Activated naive CD4-positive, alpha-beta T cell treated with anti-CD3 and anti-CD28 coated beads, Interleukin-2, amount 10 ng/mL, durations not matched to agents 7 days and 5 days (primary cell): ENCODE measurements at regions of chr17 and their contacts with region 1.

Region 1: DNA sequence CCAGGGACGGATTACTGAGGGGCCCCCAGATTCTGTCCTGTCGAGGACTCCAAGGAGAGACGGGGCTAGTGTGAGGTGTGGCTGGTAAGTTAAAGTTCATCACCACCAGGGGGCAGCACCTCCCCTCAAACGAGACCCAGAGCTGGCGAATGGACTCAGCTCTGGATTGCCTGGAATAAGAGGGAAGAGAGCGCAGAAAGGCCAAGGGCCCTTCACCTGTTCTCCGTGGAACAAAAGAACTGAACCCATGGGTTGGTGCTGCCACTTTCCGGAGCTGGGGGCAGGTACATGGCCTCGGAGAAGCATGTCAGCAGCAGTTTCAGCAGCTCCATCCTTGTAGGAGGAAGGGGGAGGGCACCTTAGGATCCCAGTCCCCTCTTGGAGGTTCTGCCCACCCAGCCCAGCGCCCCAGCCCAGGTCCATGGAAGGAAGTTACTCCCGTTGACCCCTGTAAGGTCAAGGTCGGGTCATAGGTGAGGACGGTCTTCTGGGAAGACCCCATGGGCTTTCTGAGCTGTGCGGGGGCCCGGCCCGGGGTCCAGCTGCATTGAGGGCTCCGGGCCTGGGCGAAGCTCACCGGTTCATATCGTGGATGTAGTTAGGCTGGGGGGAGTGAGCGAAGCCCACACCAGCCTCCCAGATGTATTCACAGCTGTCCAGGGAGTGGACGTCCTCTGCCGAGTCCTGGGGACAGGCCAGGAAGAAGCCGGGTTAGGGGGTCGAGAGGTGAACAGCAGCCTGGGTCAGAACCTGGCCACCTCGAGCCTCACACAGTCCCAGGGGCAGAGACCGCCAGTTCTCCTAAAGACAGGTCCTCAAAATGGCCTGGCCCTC is 10.7 kb downstream of the HID1 start:
- DNase-seq: peak; percentile 89
- H3K4me3 Mint-ChIP-seq: no peak overlapping the region
- H3K27ac Mint-ChIP-seq: no peak overlapping the region
- H3K4me1 Mint-ChIP-seq: peaks cover 9% of the 10 kb centered on the region
- H3K27me3 Mint-ChIP-seq: peaks cover 38% of the 10 kb centered on the region

Region 2: DNA sequence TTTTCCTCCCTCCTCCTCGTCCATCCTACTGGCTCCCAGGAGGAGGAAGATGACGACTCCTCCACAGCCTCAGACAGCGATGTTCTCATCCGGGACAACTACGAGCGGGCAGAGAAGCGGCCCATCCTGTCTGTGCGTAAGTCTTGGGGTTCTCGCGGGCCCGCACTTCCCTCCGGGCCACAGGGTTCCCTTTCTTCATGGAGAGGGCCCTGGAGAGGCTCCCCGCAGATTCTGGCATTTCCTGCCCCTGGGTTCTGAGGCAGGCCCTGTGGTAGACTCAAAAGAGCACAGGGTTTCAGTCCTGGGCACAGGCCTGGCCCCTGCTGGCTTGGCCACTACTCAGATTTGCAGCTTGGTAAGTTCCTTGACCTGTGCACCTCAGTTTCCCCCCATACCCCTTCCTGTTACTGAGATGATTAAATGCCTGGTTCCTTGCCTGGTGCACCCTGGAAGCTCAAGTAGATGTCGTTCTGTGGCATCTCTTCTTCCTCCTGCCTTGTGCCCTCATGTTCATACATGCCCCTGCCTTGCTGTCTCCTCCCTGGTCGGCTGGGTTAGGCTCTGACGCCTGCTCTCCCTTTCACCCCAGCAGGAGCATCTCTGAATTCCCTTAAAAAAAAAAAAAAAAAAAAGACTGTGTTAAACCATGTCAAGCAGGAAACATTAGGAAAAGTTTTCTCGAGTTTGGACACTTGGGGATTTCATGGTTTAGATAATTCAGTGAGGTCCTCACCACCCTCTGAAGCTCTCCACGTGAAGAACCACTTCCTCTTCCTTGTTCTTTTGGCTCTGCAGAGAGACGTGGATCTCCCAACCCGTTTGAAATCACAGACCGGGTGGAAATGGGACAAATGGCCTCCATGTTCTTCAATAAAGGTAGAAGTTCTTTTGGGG is 171.5 kb before region 1 on chr17:
- CTCF ChIA-PET with region 1: interaction called, 38 read pairs
- DNase-seq: peak; percentile 38
- H3K4me3 Mint-ChIP-seq: peak overlapping the region; percentile 35
- H3K27ac Mint-ChIP-seq: peak overlapping the region; percentile 88
- H3K4me1 Mint-ChIP-seq: peaks cover 49% of the 10 kb centered on the region
- H3K27me3 Mint-ChIP-seq: no peaks in the 10 kb centered on the region

Region 3: GRCh38 chr17:74951680-74952421 is 10.0 kb before region 1 on chr17:
- CTCF ChIA-PET with region 1: interaction called, 15 read pairs
- DNase-seq: no peak
- H3K4me3 Mint-ChIP-seq: no peak overlapping the region
- H3K27ac Mint-ChIP-seq: no peak overlapping the region
- H3K4me1 Mint-ChIP-seq: no peaks in the 10 kb centered on the region
- H3K27me3 Mint-ChIP-seq: peaks cover 42% of the 10 kb centered on the region

Region 4: DNA sequence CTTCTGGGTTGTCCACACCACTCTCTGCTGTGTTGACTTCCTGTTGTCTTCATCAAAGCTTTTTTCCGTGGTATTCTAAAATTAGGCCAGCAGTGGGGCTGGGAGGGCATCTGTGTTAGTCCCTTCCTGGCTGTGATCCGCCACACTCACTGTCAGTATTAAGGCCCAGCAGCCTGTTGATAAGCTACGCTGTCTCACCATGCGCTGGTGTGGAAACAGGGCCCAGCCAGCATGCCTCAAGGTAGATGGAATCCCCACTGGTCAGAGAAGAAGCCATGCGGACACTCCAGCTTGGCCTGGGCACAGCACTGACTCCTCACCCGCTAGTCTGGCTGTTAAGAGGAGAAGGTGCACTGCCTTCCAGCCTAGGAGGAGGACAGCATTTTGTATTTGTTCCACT is 36.9 kb after region 1 on chr17:
- CTCF ChIA-PET with region 1: interaction called, 12 read pairs
- DNase-seq: no peak
- H3K4me3 Mint-ChIP-seq: no peak overlapping the region
- H3K27ac Mint-ChIP-seq: peak overlapping the region; percentile 53
- H3K4me1 Mint-ChIP-seq: peaks cover 9% of the 10 kb centered on the region
- H3K27me3 Mint-ChIP-seq: peaks cover 20% of the 10 kb centered on the region

Region 5: GRCh38 chr17:75046582-75047289 is 84.9 kb after region 1 on chr17 and contains the starts of genes ATP5PD and KCTD2:
- CTCF ChIA-PET with region 1: interaction called, 11 read pairs
- DNase-seq: peak; percentile 97
- H3K4me3 Mint-ChIP-seq: peak within 1 kb of the TSS; percentile 97
- H3K27ac Mint-ChIP-seq: peak within 1 kb of the TSS; percentile 96
- H3K4me1 Mint-ChIP-seq: peaks cover 49% of the 10 kb centered on the region
- H3K27me3 Mint-ChIP-seq: peaks cover 3% of the 10 kb centered on the region

Region 6: GRCh38 chr17:75173526-75173925 is 211.7 kb after region 1 on chr17:
- CTCF ChIA-PET with region 1: interaction called, 22 read pairs
- DNase-seq: no peak
- H3K4me3 Mint-ChIP-seq: no peak overlapping the region
- H3K27ac Mint-ChIP-seq: no peak overlapping the region
- H3K4me1 Mint-ChIP-seq: peaks cover 18% of the 10 kb centered on the region
- H3K27me3 Mint-ChIP-seq: no peaks in the 10 kb centered on the region